GM18951 (cell line): ENCODE measurements at regions of chr4 and their contacts with region 1.

Region 1: DNA sequence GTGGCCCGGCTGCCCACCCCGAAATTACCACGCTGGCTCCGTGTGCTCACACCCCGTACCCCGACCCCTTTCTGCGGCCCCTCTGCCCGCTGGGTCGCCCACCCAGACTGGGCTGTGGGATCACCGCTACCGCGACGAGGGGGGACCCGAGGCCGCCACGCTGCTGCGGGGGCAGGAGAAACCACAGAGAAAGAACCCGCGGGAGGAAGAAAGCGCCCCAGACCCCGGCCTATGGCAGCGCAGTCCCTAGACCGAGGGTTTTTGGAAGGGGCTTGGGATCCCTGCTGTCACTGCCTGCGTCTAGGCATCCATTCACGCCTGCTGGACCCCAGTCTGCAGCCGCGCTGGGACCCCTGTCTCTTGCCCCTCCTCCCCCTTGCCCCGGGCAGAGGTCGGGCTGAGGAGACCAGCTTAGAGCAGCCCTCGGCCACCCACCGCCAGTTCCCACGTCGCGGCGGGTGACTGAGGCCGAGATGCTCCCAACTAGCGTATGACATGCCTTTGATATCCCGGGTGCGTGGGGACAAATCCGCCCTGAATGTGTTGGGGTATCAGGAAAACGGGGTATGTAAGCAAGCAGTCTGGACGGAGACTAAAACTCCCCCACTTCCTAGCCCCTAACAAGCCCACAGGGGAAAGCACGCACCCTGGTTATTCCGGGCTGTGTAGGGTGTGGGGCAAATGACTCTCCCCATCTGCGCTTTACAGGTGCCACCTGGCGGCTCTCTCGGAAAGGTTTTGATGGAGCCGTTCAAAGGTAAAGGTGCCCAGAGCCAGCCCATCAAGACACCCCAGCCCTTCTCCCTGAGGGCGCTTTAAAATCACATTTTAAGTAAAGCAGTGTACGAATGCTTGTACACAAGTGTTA is 862 bp upstream of the INPP4B start:
- POLR2A ChIP-seq: no peak

Region 2: DNA sequence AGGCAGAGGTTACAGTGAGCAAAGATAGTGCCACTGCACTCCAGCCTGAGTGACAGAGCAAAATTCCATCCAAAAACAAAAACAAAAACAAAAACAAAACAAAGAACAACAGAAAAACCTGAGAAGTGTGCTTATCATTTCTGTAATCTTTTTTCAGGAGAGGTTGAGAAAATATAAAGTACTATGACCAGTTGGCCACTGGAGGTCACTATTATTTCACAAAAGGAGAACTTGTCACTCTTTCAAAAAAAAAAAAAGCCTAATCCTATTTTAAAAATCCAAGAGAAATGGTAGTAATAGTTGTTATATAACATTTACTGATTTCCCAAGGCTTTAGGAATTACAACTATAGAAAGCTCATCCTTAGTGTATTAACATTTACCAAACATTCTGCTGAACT is 1688.7 kb before region 1 on chr4:
- in situ Hi-C with region 1: loop called (anchors 25 kb)
- POLR2A ChIP-seq: no peak